ENCODE measurements at regions of chr10 and their contacts with region 1.

Region 1: DNA sequence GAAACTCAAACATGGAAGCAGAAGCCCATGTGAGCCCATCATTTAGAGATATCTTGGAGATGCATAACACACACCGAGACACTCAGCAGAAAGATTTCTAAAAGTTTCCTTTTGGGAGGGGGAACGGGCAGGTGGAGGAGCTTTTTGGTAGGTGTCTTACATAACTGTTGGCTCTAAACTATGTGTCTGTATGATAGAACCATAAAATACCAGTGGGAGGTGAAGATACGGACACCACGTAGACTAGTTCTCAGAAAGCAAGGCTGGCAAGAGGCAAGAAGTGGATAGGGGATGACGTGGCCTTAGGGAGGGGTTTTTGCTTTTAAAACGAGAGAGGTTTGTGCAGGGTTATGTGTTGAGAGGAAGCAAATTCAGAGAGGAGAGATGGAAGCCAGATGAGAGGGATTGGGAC is 36.5 kb downstream of the IL15RA start:
- DNase-seq: no peak
- ATAC-seq: no peak
- H3K4me3 ChIP-seq: no peak overlapping the region
- H3K4me3 Mint-ChIP-seq: no peak overlapping the region
- H3K27ac ChIP-seq: no peak overlapping the region
- H3K27ac Mint-ChIP-seq: no peak overlapping the region
- H3K4me1 ChIP-seq: no peaks in the 10 kb centered on the region
- H3K4me1 Mint-ChIP-seq: peaks cover 2% of the 10 kb centered on the region
- H3K27me3 ChIP-seq: no peaks in the 10 kb centered on the region
- H3K27me3 Mint-ChIP-seq: no peaks in the 10 kb centered on the region
- CTCF ChIP-seq: no peak

Region 2: DNA sequence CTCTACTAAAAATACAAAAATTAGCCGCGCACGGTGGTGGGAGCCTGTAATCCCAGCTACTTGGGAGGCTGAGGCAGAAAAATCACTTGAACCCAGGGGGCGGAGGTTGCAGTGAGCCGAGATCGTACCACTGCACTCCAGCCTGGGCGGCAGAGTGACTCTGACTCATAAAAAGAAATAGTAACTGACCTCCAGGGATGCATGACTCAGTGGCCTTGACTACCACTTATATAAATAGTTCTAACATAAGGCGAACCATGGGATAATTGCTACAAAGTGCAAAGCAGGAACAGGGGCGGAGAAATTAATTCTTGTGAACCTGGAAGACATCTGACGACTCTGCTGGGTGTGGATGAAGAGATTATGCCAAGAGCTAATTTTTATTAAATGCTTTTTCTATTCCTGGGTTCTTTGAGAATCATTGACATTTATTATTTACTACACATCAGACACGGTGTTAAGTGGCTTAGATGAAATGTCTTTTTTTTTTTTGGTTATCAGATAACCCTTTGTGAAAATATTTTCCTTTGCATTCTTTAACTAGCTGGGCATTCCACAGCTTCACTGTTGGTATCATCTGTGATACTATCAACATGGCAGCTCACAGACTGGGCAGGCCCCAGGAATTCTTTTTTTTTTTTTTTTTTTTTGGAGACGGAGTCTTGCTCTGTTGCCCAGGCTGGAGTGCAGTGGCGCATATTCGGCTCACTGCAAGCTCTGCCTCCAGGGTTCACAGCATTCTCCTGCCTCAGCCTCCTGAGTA is 79.4 kb before region 1 on chr10:
- CTCF ChIA-PET with region 1: no interaction called
- POLR2A ChIA-PET with region 1: no interaction called
- intact Hi-C with region 1: no loop called
- DNase-seq: no peak
- ATAC-seq: no peak
- H3K4me3 ChIP-seq: no peak overlapping the region
- H3K4me3 Mint-ChIP-seq: no peak overlapping the region
- H3K27ac ChIP-seq: no peak overlapping the region
- H3K27ac Mint-ChIP-seq: no peak overlapping the region
- H3K4me1 ChIP-seq: no peaks in the 10 kb centered on the region
- H3K4me1 Mint-ChIP-seq: no peaks in the 10 kb centered on the region
- H3K27me3 ChIP-seq: no peaks in the 10 kb centered on the region
- H3K27me3 Mint-ChIP-seq: no peaks in the 10 kb centered on the region
- CTCF ChIP-seq: no peak

Region 3: DNA sequence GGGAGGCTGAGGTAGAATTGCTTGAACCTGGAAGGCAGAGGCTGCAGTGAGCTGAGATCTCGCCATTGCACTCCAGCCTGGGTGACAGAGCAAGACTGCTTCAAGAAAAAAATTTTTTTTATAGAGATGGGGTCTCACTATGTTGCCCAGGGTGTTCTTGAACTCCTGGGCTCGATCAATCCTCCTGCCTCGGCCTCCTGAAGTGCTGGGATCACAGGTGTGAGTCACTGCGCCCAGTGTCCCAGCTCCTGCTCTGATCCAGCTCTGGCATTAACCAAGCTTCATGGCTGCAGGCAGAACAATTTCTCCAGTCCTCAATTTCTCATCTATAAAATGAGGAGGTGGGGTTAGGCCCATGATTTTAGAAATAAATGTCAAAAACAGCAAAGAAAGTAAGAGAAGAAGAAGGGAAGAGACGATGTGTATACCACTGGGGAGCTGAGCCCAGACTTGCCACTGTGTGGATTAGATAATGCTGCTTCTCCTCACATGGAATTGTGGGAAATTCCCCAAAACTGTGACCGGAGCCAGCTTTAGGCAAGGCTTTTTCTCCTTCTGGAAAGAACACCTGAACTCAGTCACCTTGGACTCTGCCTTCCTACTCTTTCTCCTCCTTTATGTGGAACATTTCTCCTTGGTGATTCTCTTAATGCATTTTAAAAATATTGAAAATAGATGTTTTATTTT is 11.1 kb after region 1 on chr10:
- CTCF ChIA-PET with region 1: no interaction called
- POLR2A ChIA-PET with region 1: no interaction called
- intact Hi-C with region 1: no loop called
- DNase-seq: no peak
- ATAC-seq: no peak
- H3K4me3 ChIP-seq: no peak overlapping the region
- H3K4me3 Mint-ChIP-seq: no peak overlapping the region
- H3K27ac ChIP-seq: no peak overlapping the region
- H3K27ac Mint-ChIP-seq: no peak overlapping the region
- H3K4me1 ChIP-seq: no peaks in the 10 kb centered on the region
- H3K4me1 Mint-ChIP-seq: no peaks in the 10 kb centered on the region
- H3K27me3 ChIP-seq: no peaks in the 10 kb centered on the region
- H3K27me3 Mint-ChIP-seq: no peaks in the 10 kb centered on the region
- CTCF ChIP-seq: no peak

Region 4: GRCh38 chr10:5999438-6000165 is 58.8 kb after region 1 on chr10:
- CTCF ChIA-PET with region 1: no interaction called
- POLR2A ChIA-PET with region 1: no interaction called
- intact Hi-C with region 1: loop called in 1 of 2 experiments (anchors 2 kb)
- DNase-seq: peak in 1 of 9 experiments; percentile 11
- ATAC-seq: no peak
- H3K4me3 ChIP-seq: no peak overlapping the region
- H3K4me3 Mint-ChIP-seq: no peak overlapping the region
- H3K27ac ChIP-seq: no peak overlapping the region
- H3K27ac Mint-ChIP-seq: no peak overlapping the region
- H3K4me1 ChIP-seq: no peaks in the 10 kb centered on the region
- H3K4me1 Mint-ChIP-seq: peaks cover 8% of the 10 kb centered on the region
- H3K27me3 ChIP-seq: no peaks in the 10 kb centered on the region
- H3K27me3 Mint-ChIP-seq: peaks cover 7% of the 10 kb centered on the region
- CTCF ChIP-seq: no peak